ENCODE measurements at regions of chrX and their contacts with region 1.

Region 1: DNA sequence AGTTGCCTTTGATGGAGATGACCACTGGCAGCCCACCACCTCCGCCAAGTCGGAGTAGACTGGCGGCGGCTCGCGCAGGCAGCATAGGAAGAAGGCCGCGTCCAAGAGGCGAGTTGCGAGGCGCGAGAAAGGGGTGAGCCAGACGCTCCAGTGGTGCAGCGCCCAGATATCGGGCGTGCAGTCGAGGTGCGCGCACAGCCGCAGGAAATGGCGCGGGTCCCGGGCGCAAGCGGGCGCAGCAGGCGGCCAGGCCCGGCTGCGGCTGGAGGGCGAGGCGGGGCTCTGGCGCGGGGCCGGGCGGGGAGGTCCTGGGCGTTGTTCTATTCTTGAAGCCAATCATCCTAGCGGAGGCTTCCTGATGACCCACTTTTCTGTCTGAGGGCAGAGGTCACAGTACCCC is 13.2 kb upstream of the PGRMC1 start:
- DNase-seq: no peak
- ATAC-seq: no peak
- H3K4me3 ChIP-seq: no peak overlapping the region
- H3K27ac ChIP-seq: no peak overlapping the region
- H3K4me1 ChIP-seq: no peaks in the 10 kb centered on the region
- H3K27me3 ChIP-seq: peaks cover 2% of the 10 kb centered on the region
- CTCF ChIP-seq: no peak
- POLR2A ChIP-seq: no peak
- RAD21 ChIP-seq: no peak

Region 2: GRCh38 chrX:119118780-119119395 is 104.0 kb before region 1 on chrX:
- CTCF ChIA-PET with region 1: no interaction called
- POLR2A ChIA-PET with region 1: no interaction called
- dilution Hi-C with region 1: no loop called
- in situ Hi-C with region 1: no loop called
- intact Hi-C with region 1: loop called (anchors 2 kb)
- DNase-seq: peak; percentile 42
- ATAC-seq: peak; percentile 95
- H3K4me3 ChIP-seq: no peak overlapping the region
- H3K27ac ChIP-seq: no peak overlapping the region
- H3K4me1 ChIP-seq: no peaks in the 10 kb centered on the region
- H3K27me3 ChIP-seq: peaks cover 10% of the 10 kb centered on the region
- CTCF ChIP-seq: peak; percentile 61
- POLR2A ChIP-seq: no peak
- RAD21 ChIP-seq: peak; percentile 62

Region 3: GRCh38 chrX:119130911-119131310 is 92.0 kb before region 1 on chrX:
- CTCF ChIA-PET with region 1: no interaction called
- POLR2A ChIA-PET with region 1: no interaction called
- dilution Hi-C with region 1: no loop called
- in situ Hi-C with region 1: no loop called
- intact Hi-C with region 1: no loop called
- DNase-seq: no peak
- ATAC-seq: no peak
- H3K4me3 ChIP-seq: no peak overlapping the region
- H3K27ac ChIP-seq: no peak overlapping the region
- H3K4me1 ChIP-seq: no peaks in the 10 kb centered on the region
- H3K27me3 ChIP-seq: peaks cover 7% of the 10 kb centered on the region
- CTCF ChIP-seq: no peak
- POLR2A ChIP-seq: no peak
- RAD21 ChIP-seq: no peak

Region 4: GRCh38 chrX:119145241-119145653 is 77.7 kb before region 1 on chrX:
- CTCF ChIA-PET with region 1: no interaction called
- POLR2A ChIA-PET with region 1: no interaction called
- dilution Hi-C with region 1: no loop called
- in situ Hi-C with region 1: no loop called
- intact Hi-C with region 1: loop called (anchors 1 kb)
- DNase-seq: no peak
- ATAC-seq: 0 out of 2 replicates have a peak, but pooled peaks have one; percentile 32
- H3K4me3 ChIP-seq: no peak overlapping the region
- H3K27ac ChIP-seq: no peak overlapping the region
- H3K4me1 ChIP-seq: no peaks in the 10 kb centered on the region
- H3K27me3 ChIP-seq: peaks cover 8% of the 10 kb centered on the region
- CTCF ChIP-seq: peak; percentile 35
- POLR2A ChIP-seq: no peak
- RAD21 ChIP-seq: peak; percentile 48

Measured in IMR-90 (cell line).